AG04450 (cell line): ENCODE measurements at regions of chr17 and their contacts with region 1.

Region 1: GRCh38 chr17:42422958-42423712 is at the start of gene CAVIN1:
- DNase-seq: peak; percentile 97
- H3K4me3 ChIP-seq: peak within 1 kb of the TSS; percentile 99
- H3K27ac ChIP-seq: peak within 1 kb of the TSS; percentile 96
- H3K27me3 ChIP-seq: no peaks in the 10 kb centered on the region
- CTCF ChIP-seq: no peak
- polyA plus RNA-seq, gene CAVIN1: 326 and 390 TPM in 2 replicates

Region 2: DNA sequence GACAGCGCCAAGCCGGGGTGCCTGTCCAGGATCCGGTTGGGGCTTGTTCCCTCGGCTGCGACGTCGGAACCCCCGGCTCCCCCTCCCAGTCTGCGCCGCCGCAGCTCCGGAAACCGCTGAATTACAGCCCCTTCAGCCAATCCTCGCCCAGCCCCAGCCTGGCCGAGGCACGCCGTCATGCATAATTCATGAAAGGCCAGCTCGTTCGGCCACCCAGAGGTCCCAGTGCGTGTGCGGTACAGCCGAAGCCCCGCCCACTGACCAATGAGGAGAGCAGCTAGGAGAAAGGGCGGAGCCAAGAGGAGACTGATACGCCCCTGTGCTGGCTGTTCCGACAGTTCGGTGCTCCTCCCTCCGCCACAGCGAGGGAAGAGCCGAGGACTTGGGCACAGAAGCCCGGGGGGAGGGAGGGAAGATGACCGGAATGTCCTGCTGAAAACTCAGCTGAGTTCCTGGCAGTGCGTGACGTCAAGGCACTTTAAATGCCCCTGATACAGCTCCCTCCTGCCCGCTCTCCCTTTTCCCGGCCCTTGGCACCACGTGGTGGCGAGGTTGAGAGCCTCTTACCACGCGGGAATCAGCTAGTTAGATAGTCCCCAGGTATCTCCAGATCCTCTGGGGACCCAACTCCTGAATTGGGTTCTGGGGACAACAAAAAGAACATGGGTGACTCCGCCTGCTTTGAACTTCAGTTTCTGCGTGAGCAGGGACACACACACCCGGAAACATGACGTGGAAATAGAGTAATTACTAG is 34.6 kb before region 1 on chr17 and contains the start of gene STAT3:
- CTCF ChIA-PET with region 1: no interaction called
- POLR2A ChIA-PET with region 1: interaction called, 25 read pairs
- DNase-seq: peak; percentile 99
- H3K4me3 ChIP-seq: peak within 1 kb of the TSS; percentile 91
- H3K27ac ChIP-seq: peak within 1 kb of the TSS; percentile 98
- H3K27me3 ChIP-seq: no peaks in the 10 kb centered on the region
- CTCF ChIP-seq: no peak
- polyA plus RNA-seq, gene STAT3: 77.1 and 83.4 TPM in 2 replicates

Region 3: DNA sequence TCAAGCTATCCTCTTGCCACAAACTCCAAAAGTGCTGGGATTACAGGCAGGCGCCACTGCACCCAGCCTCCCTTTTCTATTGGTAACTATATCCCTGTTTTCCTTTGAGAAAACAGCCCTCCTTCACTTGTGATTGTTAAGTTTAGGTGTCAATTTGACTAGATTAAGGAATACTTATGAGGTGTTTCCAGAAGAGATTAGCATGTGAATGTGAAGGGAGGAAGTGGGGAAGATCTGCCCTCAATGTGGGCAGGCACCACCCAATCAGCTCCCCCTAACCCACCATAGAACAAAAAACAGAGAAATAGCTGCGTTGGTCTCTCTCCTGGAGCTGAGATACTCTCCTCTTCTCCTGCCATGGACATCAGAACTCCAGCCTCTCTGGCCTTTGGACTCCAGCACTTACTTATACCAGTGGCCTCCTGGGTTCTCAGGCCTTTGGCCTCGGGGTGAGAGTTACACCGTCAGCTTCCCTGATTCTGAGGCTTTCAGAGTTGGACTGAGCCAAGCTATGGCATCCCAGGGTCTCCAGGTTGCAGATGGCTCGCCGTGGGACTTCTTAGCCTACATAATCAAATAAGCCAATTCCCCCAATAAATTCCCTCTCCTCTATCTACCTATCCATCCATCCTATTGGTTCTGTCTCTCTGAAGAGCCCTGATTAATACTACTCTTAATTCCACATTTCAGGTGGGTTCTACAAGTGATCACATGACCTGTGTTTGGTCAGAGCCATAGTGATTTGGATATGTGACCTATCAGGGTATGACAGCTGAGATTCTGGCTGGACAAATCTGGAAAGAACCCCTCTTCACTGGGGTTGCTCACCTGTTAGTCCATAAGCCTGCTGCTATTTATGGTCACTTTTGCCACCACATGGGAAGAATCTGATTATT is 22.9 kb before region 1 on chr17:
- CTCF ChIA-PET with region 1: no interaction called
- POLR2A ChIA-PET with region 1: interaction called, 10 read pairs
- DNase-seq: no peak
- H3K4me3 ChIP-seq: no peak overlapping the region
- H3K27ac ChIP-seq: peak overlapping the region; percentile 48
- H3K27me3 ChIP-seq: no peaks in the 10 kb centered on the region
- CTCF ChIP-seq: no peak

Region 4: DNA sequence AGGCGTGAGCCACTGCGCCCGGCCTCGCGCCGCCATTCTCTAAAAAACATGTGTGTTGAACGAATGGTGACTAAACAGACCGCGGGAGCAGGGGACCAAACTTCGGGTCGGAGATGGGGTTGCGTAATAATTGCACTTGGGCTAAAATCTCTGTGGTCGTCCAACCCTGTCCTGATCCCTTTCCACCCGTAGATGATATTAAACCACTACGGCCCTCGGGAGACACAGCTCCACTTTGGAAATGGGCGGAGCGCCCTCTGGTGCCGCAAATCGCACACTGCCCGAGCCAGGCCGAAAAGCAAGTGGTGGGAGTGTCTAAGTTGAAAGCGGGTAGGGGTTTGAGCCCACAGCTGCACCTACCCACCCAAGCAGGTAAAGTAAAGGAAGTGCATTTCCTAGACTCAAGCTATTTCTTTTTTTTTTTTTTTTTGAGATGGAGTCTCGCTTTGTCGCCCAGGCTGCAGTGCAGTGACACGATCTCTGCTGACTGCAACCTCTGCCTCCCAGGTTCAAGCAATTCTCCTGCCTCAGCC is 17.1 kb before region 1 on chr17:
- CTCF ChIA-PET with region 1: interaction called, 6 read pairs
- POLR2A ChIA-PET with region 1: interaction called, 23 read pairs
- DNase-seq: no peak
- H3K4me3 ChIP-seq: no peak overlapping the region
- H3K27ac ChIP-seq: no peak overlapping the region
- H3K27me3 ChIP-seq: no peaks in the 10 kb centered on the region
- CTCF ChIP-seq: peak; percentile 74

Region 5: DNA sequence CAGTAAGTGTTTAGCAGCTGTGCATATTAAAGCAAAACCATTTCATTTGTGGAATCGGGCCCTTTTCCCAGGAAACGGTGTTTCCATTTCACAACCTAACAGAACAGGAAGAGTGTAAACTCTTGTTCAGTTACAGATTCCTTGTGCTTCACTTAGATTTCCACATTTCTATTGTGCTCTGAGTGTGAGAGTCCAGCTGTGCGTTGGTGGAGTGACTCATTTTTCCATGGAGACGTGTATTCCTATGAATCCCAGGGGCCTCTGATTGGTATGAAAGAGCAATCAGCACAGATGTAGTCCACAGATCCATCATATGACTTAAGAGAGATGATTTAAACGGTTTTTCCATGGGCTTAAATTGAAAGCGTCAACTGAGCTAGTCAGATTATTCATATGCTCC is 13.3 kb after region 1 on chr17:
- CTCF ChIA-PET with region 1: interaction called, 3 read pairs
- POLR2A ChIA-PET with region 1: interaction called, 20 read pairs
- DNase-seq: peak; percentile 94
- H3K4me3 ChIP-seq: no peak overlapping the region; the same call in 1 of the 2 replicates
- H3K27ac ChIP-seq: peak overlapping the region; percentile 93
- H3K27me3 ChIP-seq: no peaks in the 10 kb centered on the region
- CTCF ChIP-seq: no peak

Region 6: DNA sequence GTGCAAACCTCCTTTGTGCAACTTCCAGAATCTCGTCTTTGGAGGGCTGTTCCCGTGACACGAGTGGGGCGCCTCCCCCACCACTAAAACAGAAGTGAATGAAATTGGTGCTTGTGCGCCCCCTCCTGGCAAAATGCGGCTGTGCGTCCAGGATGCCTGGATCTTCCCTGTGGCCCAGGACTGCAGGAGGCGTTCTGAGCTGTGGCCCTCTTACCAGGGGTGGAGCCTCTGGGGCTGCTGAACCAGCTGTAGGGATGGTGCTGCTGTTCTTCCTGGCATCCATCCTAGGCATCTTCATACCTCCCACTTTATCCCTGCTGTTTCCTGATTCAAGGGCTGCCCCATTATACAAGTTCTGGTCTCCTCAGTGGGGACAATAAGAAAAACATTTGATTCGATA is 94.4 kb after region 1 on chr17:
- CTCF ChIA-PET with region 1: interaction called, 8 read pairs
- POLR2A ChIA-PET with region 1: interaction called, 68 read pairs
- DNase-seq: peak; percentile 87
- H3K4me3 ChIP-seq: no peak overlapping the region
- H3K27ac ChIP-seq: peak overlapping the region; percentile 100
- H3K27me3 ChIP-seq: no peaks in the 10 kb centered on the region
- CTCF ChIP-seq: peak; percentile 95

Region 7: DNA sequence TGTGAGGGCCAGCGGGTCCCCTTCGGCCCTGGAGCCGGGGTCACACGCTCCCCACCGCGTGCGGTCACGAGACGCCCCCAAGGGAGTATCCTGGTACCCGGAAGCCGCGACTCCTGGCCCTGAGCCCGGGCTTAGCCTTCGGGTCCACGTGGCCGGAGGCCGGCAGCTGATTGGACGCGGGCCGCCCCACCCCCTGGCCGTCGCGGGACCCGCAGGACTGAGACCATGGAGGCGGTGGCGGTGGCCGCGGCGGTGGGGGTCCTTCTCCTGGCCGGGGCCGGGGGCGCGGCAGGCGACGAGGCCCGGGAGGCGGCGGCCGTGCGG is 112.9 kb after region 1 on chr17 and contains the start of gene NAGLU:
- CTCF ChIA-PET with region 1: interaction called, 3 read pairs
- POLR2A ChIA-PET with region 1: interaction called, 11 read pairs
- DNase-seq: no peak
- H3K4me3 ChIP-seq: peak within 1 kb of the TSS; percentile 69
- H3K27ac ChIP-seq: peak within 1 kb of the TSS; percentile 70
- H3K27me3 ChIP-seq: no peaks in the 10 kb centered on the region
- CTCF ChIP-seq: no peak
- polyA plus RNA-seq, gene NAGLU: 11.9 and 17.2 TPM in 2 replicates